MCF 10A (cell line): ENCODE measurements at regions of chr9 and their contacts with region 1.

Region 1: DNA sequence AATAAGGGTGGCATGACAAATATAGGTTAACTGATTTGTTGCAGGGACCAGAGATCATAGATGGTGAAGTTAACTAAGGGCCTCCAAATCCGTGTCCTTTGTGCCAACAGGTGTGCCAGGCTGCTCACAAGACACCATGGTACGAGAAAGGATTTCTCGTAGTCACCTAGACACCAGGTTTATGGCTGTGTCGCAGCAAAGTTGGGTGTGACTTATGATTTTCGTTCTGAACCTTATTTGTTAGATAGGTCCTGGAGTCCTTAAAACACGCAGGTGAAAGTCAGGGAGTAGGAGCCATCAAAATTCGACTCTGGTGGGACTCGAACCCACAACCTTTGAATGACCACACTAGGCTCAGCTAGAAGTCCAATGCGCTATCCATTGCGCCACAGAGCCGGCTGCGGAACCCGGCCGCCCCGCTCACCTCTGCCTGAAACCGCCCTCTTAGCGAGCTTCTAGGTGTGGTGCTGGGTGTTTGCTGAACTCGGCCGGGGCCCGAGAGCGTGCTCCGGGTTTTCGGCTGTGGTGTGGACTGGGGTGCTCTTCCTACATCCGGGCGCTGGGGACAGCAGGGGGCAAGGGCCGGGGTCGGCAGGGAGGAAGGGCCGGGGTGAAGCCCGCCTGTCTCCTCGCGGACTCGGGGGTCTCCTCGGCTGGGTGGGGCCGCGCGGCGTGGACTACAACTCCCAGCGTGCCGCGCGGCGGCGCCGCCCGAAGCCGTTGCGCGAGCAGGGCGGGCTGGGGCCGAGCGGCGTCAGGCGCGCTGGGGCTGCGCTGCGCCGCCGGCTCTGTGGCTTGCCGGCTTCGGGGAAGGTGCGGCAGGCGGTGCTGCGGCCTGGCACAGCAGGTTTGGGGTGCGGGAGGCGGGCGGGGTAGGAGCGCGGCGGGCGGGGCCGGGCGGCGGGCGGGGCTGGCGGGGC is at the start of gene SLC27A4:
- DNase-seq: peak; percentile 91
- H3K4me3 Mint-ChIP-seq: peak within 1 kb of the TSS; percentile 92
- H3K27ac Mint-ChIP-seq: peak within 1 kb of the TSS; percentile 93
- H3K4me1 Mint-ChIP-seq: peaks cover 6% of the 10 kb centered on the region
- H3K27me3 Mint-ChIP-seq: no peaks in the 10 kb centered on the region
- CTCF ChIP-seq: no peak
- total RNA-seq, gene SLC27A4: 17.0 and 18.8 TPM in 2 replicates

Region 2: GRCh38 chr9:128282500-128282899 is 57.5 kb before region 1 on chr9:
- CTCF ChIA-PET with region 1: no interaction called
- POLR2A ChIA-PET with region 1: no interaction called
- intact Hi-C with region 1: no loop called
- DNase-seq: no peak
- H3K4me3 Mint-ChIP-seq: no peak overlapping the region
- H3K27ac Mint-ChIP-seq: no peak overlapping the region
- H3K4me1 Mint-ChIP-seq: no peaks in the 10 kb centered on the region
- H3K27me3 Mint-ChIP-seq: no peaks in the 10 kb centered on the region
- CTCF ChIP-seq: no peak

Region 3: GRCh38 chr9:128310461-128310860 is 29.6 kb before region 1 on chr9:
- CTCF ChIA-PET with region 1: interaction called, 5 read pairs
- POLR2A ChIA-PET with region 1: interaction called, 15 read pairs
- intact Hi-C with region 1: loop called (anchors 2 kb)
- DNase-seq: no peak
- H3K4me3 Mint-ChIP-seq: no peak overlapping the region
- H3K27ac Mint-ChIP-seq: no peak overlapping the region
- H3K4me1 Mint-ChIP-seq: no peaks in the 10 kb centered on the region
- H3K27me3 Mint-ChIP-seq: no peaks in the 10 kb centered on the region
- CTCF ChIP-seq: no peak